ENCODE measurements at regions of chr10 and their contacts with region 1.

Region 1: DNA sequence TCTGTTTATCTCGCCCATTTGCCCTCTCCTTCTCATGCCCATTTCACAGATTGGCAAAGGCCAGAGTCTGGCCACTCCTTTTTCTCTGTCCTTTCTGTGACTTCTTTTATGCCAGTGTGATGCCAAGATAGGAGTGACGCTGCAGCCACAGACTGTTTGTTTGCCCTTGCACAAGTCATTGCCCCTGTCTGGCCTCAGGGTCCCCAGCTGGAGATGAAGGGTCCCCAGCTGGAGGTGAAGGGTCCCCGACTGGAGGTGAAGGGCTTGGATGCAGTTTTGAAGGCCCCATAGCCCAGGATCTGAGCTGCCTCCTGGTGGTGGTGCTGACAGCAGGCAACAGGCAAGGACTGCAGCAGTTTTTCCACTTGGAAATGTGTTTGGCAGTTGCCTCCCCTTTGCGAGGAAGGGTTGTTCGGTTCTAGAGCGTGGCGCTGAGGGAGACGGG is 50.8 kb upstream of the SLC29A3 start:
- DNase-seq: peak in 1 of 2 donors; percentile 70
- H3K4me3 ChIP-seq: peak overlapping the region in 1 of 2 donors; percentile 6
- H3K27ac ChIP-seq: peak overlapping the region; percentile 26 to 49
- H3K4me1 ChIP-seq: peaks cover 0 to 8% of the 10 kb centered on the region in 2 donors
- H3K27me3 ChIP-seq: no peaks in the 10 kb centered on the region
- CTCF ChIP-seq: peak; percentile 45 to 68 (median 53)

Region 2: DNA sequence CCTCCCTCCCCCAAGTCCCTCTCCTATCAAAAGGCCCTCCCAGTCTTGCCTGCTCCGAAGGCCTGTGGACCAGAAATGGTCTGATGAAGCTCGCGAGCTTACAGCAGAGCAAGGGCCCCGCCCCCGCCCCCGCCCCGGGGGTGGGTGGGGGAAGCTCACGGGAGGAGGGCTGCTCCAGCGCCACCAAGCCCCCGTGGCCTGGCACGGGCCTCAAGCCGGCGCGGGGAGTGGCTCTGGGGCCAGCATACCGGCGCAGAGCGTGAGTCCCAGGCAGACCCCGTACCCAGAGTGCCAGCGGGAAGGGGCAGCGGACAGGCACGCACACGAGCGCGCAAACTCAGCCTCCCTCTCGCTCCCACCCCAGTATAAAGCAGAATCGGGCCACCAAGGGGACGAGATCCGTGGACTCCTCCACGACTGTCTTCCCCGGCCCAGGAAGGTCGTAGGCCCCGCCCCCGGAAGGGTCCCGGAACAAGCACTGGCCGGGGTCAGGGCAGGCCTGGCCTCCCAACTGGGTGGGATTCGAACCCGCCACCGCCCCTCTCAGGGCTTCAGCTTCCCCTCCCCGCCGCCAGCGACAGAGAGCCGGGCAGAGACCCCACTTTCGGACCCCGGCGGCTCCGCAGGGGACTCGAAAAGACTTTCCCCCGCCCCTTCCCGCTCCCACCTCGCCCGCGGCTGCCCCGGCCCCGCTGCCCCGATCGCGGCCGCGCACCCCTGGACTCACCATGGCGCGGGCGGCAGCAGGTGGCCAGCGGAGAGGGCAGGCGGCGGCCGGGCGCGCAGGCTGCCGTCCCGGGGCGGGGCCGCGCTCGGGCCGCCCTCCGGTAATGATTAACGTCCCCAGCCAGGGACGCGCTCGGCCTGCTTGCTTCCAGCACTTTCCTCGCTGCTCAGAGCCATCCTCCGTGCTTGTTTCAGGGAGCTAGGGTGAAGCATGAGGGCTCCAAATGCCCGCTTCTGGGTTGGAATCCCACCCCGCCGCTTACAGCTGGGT is 380.2 kb before region 1 on chr10 and contains the start of gene PCBD1:
- intact Hi-C with region 1: no loop called
- DNase-seq: peak; percentile 48 to 93
- H3K4me3 ChIP-seq: peak within 1 kb of the TSS; percentile 79 to 80
- H3K27ac ChIP-seq: peak within 1 kb of the TSS; percentile 92 to 96
- H3K4me1 ChIP-seq: peaks cover 0 to 3% of the 10 kb centered on the region in 2 donors
- H3K27me3 ChIP-seq: no peaks in the 10 kb centered on the region
- CTCF ChIP-seq: peak in 1 of 3 experiments; percentile 9
- total RNA-seq, gene PCBD1: 45.8 TPM

Region 3: GRCh38 chr10:70925377-70926225 is 342.7 kb before region 1 on chr10:
- intact Hi-C with region 1: loop called (anchors 5 kb)
- DNase-seq: peak in 1 of 2 donors; percentile 73
- H3K4me3 ChIP-seq: no peak overlapping the region
- H3K27ac ChIP-seq: no peak overlapping the region
- H3K4me1 ChIP-seq: peaks cover 0 to 4% of the 10 kb centered on the region in 2 donors
- H3K27me3 ChIP-seq: no peaks in the 10 kb centered on the region
- CTCF ChIP-seq: peak; percentile 90 to 98 (median 98)

Region 4: GRCh38 chr10:71234970-71235685 is 33.1 kb before region 1 on chr10:
- intact Hi-C with region 1: loop called (anchors 5 kb)
- DNase-seq: peak in 1 of 2 donors; percentile 78
- H3K4me3 ChIP-seq: no peak overlapping the region
- H3K27ac ChIP-seq: peak overlapping the region; percentile 55 to 81
- H3K4me1 ChIP-seq: peaks cover 8 to 39% of the 10 kb centered on the region in 2 donors
- H3K27me3 ChIP-seq: no peaks in the 10 kb centered on the region
- CTCF ChIP-seq: no peak

Measured in ascending aorta (tissue), 2 donors.